ENCODE measurements at regions of chr11 and their contacts with region 1.

Region 1: DNA sequence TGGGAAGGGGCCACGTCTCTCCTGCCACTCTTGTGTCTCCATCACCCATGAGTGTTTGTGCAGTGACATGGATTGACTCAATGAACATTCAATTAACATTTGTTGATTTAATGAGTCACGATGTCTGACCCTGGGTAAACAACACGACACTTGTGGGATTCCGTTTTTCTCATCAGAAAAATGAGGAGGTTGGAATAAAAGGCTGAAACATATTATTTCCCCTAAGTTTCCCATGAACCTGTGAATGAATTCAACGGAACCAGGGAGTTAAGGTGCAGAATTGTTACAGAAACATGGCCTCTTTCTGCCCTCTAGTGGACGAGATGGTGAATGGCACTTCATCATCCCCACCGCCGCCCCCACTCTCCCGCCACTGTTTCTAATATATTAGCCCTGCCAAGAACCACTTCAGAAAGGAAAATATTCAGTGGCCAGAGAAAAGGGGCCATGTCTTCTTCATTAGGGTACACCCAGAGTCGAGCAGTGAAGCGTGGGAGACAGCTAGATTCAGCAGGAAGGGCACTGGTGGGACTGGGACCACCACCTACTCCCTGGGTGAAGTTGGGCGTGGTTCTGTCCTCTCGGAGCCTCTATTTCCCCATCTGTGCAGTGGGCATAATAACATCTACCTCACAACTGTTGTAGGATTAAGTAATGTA is 46.3 kb upstream of the SYT13 start:
- DNase-seq: peak; percentile 34 to 56 (median 50)
- H3K4me3 ChIP-seq: no peak overlapping the region
- H3K27ac ChIP-seq: no peak overlapping the region
- H3K4me1 ChIP-seq: peaks cover 0 to 4% (median 0%) of the 10 kb centered on the region in 4 experiments
- H3K27me3 ChIP-seq: peaks cover 0 to 5% (median 0%) of the 10 kb centered on the region in 5 experiments

Region 2: GRCh38 chr11:45305874-45306623 is 26.4 kb before region 1 on chr11:
- CTCF ChIA-PET with region 1: interaction called, 10 read pairs
- POLR2A ChIA-PET with region 1: no interaction called
- DNase-seq: peak in 1 of 3 donors; percentile 11
- H3K4me3 ChIP-seq: no peak overlapping the region
- H3K27ac ChIP-seq: no peak overlapping the region
- H3K4me1 ChIP-seq: peaks cover 0 to 7% (median 2%) of the 10 kb centered on the region in 4 experiments
- H3K27me3 ChIP-seq: no peaks in the 10 kb centered on the region

Region 3: DNA sequence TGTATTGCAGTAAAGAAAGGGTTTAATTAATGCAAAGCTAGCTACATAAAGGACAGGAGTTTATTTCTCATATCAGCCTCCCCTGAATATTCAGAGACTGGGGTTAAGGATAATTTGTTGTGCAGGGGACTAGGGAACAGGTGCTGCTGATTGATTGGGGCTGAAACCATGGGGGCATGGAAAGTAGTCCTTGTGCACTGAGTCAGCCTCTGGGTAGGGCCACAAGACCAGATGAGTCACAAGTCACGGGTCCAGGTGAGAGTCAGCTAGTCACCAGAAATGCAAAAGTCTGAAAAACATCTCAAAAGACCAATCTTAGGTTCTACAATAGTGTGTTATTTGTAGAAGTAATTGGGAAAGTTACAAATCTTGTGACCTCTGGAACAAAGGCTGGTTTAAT is 13.3 kb before region 1 on chr11:
- CTCF ChIA-PET with region 1: interaction called, 18 read pairs
- POLR2A ChIA-PET with region 1: no interaction called
- DNase-seq: no peak
- H3K4me3 ChIP-seq: no peak overlapping the region
- H3K27ac ChIP-seq: no peak overlapping the region
- H3K4me1 ChIP-seq: no peaks in the 10 kb centered on the region
- H3K27me3 ChIP-seq: peaks cover 0 to 7% (median 0%) of the 10 kb centered on the region in 5 experiments